ENCODE measurements at regions of chr2 and their contacts with region 1.

Region 1: GRCh38 chr2:13006829-13007717 is 290.3 kb downstream of the TRIB2 start:
- DNase-seq: peak; percentile 63 to 74 (median 65)
- H3K4me3 ChIP-seq: no peak overlapping the region
- H3K27ac ChIP-seq: no peak overlapping the region
- H3K4me1 ChIP-seq: no peaks in the 10 kb centered on the region
- H3K27me3 ChIP-seq: peaks cover 0 to 32% (median 9%) of the 10 kb centered on the region in 5 experiments

Region 2: DNA sequence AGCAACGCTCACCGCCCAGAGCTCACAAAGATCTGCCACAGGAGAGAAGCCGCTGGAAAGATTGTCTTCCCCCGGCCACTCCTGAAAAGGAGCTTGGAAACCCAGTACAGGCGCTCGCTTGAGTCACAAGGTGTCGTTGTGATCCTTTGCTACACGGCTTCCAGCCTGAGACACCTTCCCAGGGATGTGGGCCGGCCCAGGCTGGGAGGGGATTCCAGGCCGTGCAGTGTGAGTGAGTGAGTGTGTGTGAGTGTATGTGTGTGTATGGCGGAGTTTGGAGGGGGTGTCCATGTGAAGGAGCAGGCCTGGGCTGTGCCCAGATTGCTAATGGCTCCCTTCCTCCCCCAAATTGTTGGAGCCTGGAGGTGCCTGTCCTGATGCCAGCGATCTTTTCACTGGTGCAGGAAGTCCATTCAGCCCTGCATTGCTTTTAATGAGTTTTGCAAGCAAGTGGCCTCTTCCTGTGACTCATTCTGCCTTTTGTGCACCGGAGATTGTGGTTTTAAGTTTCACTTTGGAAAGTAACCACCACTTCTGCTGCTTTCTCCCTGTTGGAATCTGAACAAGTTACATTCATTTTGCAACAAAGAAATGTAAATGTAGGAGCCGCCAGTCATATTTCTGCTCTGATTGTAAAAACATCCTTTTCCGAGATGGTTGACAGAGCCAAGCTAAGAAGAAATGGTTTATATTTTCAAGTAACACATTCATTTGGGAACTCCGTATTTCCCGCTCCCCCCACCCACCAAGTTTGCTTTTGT is 1176.9 kb before region 1 on chr2:
- CTCF ChIA-PET with region 1: interaction called, 34 read pairs
- POLR2A ChIA-PET with region 1: no interaction called
- DNase-seq: peak; percentile 92 to 98 (median 97)
- H3K4me3 ChIP-seq: peak overlapping the region in 6 of 7 experiments; percentile 5 to 64 (median 36)
- H3K27ac ChIP-seq: peak overlapping the region in 1 of 2 experiments; percentile 56
- H3K4me1 ChIP-seq: peaks cover 17 to 50% (median 30%) of the 10 kb centered on the region in 4 experiments
- H3K27me3 ChIP-seq: peaks cover 0 to 37% (median 15%) of the 10 kb centered on the region in 5 experiments

Region 3: GRCh38 chr2:13018490-13018889 is 11.4 kb after region 1 on chr2:
- CTCF ChIA-PET with region 1: interaction called, 13 read pairs
- POLR2A ChIA-PET with region 1: no interaction called
- DNase-seq: no peak
- H3K4me3 ChIP-seq: no peak overlapping the region
- H3K27ac ChIP-seq: no peak overlapping the region
- H3K4me1 ChIP-seq: peaks cover 0 to 13% (median 2%) of the 10 kb centered on the region in 4 experiments
- H3K27me3 ChIP-seq: no peaks in the 10 kb centered on the region

Measured in common myeloid progenitor, CD34-positive (primary cell).